Activated CD4-positive, alpha-beta T cell treated with anti-CD3 and anti-CD28 coated beads, Interleukin-2, amount 10 ng/mL, durations not matched to agents 7 days and 5 days (primary cell): ENCODE measurements at regions of chr1 and their contacts with region 1.

Region 1: DNA sequence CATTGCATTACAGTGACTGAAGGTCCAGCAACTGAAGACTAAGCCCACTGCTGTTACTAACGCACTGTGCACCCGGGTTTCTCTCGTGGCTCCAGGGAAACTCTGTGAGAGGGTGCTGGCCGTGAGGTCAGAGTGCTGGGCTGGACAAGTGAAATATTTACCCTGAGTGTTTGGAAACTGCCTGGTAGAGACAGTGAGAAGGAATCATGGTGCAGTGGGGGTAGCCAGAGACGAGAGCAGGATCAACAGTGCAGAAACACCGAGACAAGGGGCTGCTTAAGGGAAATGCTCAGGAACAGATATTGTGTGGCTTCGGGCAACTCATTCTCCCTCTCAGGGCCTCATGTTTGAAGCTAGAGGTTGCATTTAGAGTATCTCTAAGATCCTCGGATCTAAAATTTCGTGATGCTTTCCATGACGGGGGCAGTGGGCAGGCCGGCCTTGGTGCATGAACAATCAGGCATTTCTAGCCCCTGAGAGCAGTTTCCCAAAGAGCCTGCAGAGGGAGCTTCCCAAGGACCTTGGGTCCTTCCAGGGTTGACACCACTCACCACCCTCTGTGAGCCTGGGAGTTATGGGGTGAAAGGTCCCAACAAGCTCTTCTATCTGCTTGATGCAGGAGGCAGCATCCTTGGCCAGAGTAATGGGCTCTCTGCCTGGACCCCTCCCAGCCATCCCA is 9.7 kb downstream of the CD2 start:
- DNase-seq: peak; percentile 52
- H3K4me3 Mint-ChIP-seq: peak overlapping the region; percentile 65
- H3K27ac Mint-ChIP-seq: peak overlapping the region; percentile 96
- H3K4me1 Mint-ChIP-seq: peaks cover 96% of the 10 kb centered on the region
- H3K27me3 Mint-ChIP-seq: no peaks in the 10 kb centered on the region

Region 2: GRCh38 chr1:116748272-116748671 is 15.7 kb before region 1 on chr1:
- CTCF ChIA-PET with region 1: interaction called, 12 read pairs
- POLR2A ChIA-PET with region 1: interaction called, 32 read pairs
- DNase-seq: no peak
- H3K4me3 Mint-ChIP-seq: no peak overlapping the region
- H3K27ac Mint-ChIP-seq: no peak overlapping the region
- H3K4me1 Mint-ChIP-seq: peaks cover 23% of the 10 kb centered on the region
- H3K27me3 Mint-ChIP-seq: no peaks in the 10 kb centered on the region

Region 3: GRCh38 chr1:116806245-116806644 is 42.3 kb after region 1 on chr1:
- CTCF ChIA-PET with region 1: interaction called, 7 read pairs
- POLR2A ChIA-PET with region 1: interaction called, 10 read pairs
- DNase-seq: peak; percentile 52
- H3K4me3 Mint-ChIP-seq: peak overlapping the region; percentile 42
- H3K27ac Mint-ChIP-seq: peak overlapping the region; percentile 90
- H3K4me1 Mint-ChIP-seq: peaks cover 92% of the 10 kb centered on the region
- H3K27me3 Mint-ChIP-seq: no peaks in the 10 kb centered on the region

Region 4: GRCh38 chr1:116817582-116818064 is 53.7 kb after region 1 on chr1:
- CTCF ChIA-PET with region 1: interaction called, 65 read pairs
- POLR2A ChIA-PET with region 1: interaction called, 21 read pairs
- DNase-seq: peak; percentile 80
- H3K4me3 Mint-ChIP-seq: peak overlapping the region; percentile 27
- H3K27ac Mint-ChIP-seq: peak overlapping the region; percentile 90
- H3K4me1 Mint-ChIP-seq: peaks cover 62% of the 10 kb centered on the region
- H3K27me3 Mint-ChIP-seq: no peaks in the 10 kb centered on the region

Region 5: GRCh38 chr1:116826818-116827606 is 63.1 kb after region 1 on chr1:
- CTCF ChIA-PET with region 1: interaction called, 18 read pairs
- POLR2A ChIA-PET with region 1: interaction called, 8 read pairs
- DNase-seq: peak; percentile 72
- H3K4me3 Mint-ChIP-seq: peak overlapping the region; percentile 31
- H3K27ac Mint-ChIP-seq: peak overlapping the region; percentile 91
- H3K4me1 Mint-ChIP-seq: peaks cover 50% of the 10 kb centered on the region
- H3K27me3 Mint-ChIP-seq: no peaks in the 10 kb centered on the region